ENCODE measurements at regions of chr17 and their contacts with region 1.

Region 1: DNA sequence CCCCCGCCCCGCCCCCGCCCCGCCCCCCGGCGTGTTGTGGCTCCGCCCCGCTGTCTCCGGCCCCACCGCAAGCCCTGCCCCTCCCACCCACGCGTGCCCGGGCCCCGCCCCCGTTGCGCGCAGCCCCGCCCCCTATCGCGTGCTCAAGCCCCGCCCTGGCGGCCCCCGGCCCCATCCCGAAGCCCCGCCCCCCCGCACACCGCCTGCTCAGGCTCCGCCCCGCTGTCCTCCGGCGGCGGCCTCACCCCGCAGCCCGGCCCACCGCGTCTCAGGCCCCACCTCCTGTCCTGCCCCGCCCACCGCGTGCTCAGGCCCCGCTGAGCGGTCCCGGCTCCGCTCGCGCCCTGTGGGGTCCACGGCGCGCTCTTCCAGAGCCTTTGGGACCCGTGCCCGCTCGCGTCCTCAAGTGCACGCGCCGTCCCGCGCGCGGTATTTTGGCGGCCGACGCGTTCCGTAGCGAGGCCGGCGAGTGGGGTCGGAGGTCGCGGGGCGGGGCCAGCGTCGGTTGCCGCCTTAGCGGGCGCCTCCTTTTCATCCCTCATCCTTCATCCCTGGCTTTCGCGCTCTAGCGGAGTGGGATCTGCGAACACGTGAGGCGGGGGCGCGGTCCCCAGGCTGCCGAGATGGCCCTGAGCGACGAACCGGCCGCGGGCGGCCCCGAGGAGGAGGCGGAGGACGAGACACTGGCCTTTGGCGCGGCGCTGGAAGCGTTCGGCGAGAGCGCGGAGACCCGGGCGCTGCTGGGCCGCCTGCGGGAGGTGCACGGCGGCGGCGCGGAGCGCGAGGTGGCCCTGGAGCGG is at the start of gene TBCD:
- DNase-seq: peak; percentile 95
- ATAC-seq: peak; percentile 87
- H3K4me3 ChIP-seq: peak within 1 kb of the TSS; percentile 40 to 93 (median 75)
- H3K4me3 Mint-ChIP-seq: peak within 1 kb of the TSS; percentile 85
- H3K27ac ChIP-seq: peak within 1 kb of the TSS; percentile 44 to 62
- H3K27ac Mint-ChIP-seq: peak within 1 kb of the TSS; percentile 76
- H3K4me1 ChIP-seq: peaks cover 7 to 15% of the 10 kb centered on the region in 2 donors
- H3K4me1 Mint-ChIP-seq: peaks cover 14% of the 10 kb centered on the region
- H3K27me3 ChIP-seq: no peaks in the 10 kb centered on the region
- H3K27me3 Mint-ChIP-seq: no peaks in the 10 kb centered on the region
- CTCF ChIP-seq: no peak
- total RNA-seq, gene TBCD: 97.3 and 101 TPM in 2 replicates

Region 2: DNA sequence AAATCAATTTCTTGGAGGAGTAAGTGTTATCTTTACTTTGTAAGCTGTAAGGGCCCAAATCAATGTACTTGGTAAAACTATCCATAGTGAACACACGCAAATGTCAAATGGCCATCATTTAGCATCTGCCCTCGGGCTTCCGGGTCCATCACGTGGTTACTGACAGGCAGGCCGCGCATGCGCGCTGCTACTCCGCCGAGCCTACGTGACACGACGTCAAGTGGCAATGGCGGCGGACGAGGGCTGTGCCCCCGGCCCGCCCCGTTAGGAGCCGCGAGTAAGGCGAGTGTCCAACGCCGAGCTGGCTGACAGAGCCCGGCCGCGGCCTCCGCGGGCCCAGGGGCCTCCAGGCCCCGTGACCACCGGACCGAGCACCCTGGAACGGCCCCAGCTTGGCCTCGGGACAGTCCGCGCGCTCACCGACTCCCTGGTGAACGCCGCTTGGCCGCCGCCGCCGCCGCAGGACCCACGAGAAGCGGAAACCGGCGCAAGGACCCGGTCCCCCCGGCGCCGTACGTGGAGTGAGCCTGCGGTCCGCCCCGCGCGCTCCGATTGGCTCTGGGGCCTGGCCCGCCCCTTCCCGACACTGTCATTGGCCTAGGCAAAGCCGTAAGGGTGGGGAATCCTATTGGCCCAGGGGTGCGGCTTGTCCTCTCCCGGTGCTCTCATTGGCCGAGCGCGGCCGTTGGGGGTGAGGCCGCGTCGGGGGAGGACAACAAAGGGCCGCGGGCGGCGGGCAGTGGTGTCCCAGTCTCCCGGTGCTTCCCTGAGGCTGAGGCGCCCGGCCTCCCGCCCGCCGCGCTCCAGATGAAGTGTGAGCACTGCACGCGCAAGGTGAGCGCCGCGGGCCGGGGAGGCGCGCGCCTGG is 293.5 kb before region 1 on chr17 and contains the start of gene NARF:
- CTCF ChIA-PET with region 1: no interaction called
- POLR2A ChIA-PET with region 1: no interaction called
- intact Hi-C with region 1: loop called (anchors 5 kb)
- DNase-seq: peak; percentile 97
- ATAC-seq: peak; percentile 96
- H3K4me3 ChIP-seq: peak within 1 kb of the TSS; percentile 53 to 82 (median 74)
- H3K4me3 Mint-ChIP-seq: peak within 1 kb of the TSS; percentile 81
- H3K27ac ChIP-seq: peak within 1 kb of the TSS; percentile 91 to 99
- H3K27ac Mint-ChIP-seq: peak within 1 kb of the TSS; percentile 90
- H3K4me1 ChIP-seq: peaks cover 13 to 19% of the 10 kb centered on the region in 2 donors
- H3K4me1 Mint-ChIP-seq: peaks cover 19% of the 10 kb centered on the region
- H3K27me3 ChIP-seq: no peaks in the 10 kb centered on the region
- H3K27me3 Mint-ChIP-seq: no peaks in the 10 kb centered on the region
- CTCF ChIP-seq: no peak
- total RNA-seq, gene NARF: 103 and 104 TPM in 2 replicates

Region 3: GRCh38 chr17:82648166-82648668 is 103.6 kb before region 1 on chr17 and contains the start of gene WDR45B:
- CTCF ChIA-PET with region 1: no interaction called
- POLR2A ChIA-PET with region 1: no interaction called
- intact Hi-C with region 1: loop called (anchors 5 kb)
- DNase-seq: peak; percentile 96
- ATAC-seq: peak; percentile 89
- H3K4me3 ChIP-seq: peak within 1 kb of the TSS; percentile 41 to 85 (median 75)
- H3K4me3 Mint-ChIP-seq: peak within 1 kb of the TSS; percentile 92
- H3K27ac ChIP-seq: peak within 1 kb of the TSS; percentile 83 to 89
- H3K27ac Mint-ChIP-seq: peak within 1 kb of the TSS; percentile 97
- H3K4me1 ChIP-seq: peaks cover 15 to 20% of the 10 kb centered on the region in 2 donors
- H3K4me1 Mint-ChIP-seq: peaks cover 23% of the 10 kb centered on the region
- H3K27me3 ChIP-seq: no peaks in the 10 kb centered on the region
- H3K27me3 Mint-ChIP-seq: no peaks in the 10 kb centered on the region
- CTCF ChIP-seq: no peak
- total RNA-seq, gene WDR45B: 63.3 and 72.7 TPM in 2 replicates

Region 4: GRCh38 chr17:82698065-82698973 is 53.5 kb before region 1 on chr17 and contains the start of gene RAB40B:
- CTCF ChIA-PET with region 1: no interaction called
- POLR2A ChIA-PET with region 1: no interaction called
- intact Hi-C with region 1: loop called (anchors 1 kb)
- DNase-seq: peak; percentile 99
- ATAC-seq: peak; percentile 97
- H3K4me3 ChIP-seq: peak within 1 kb of the TSS; percentile 17 to 72 (median 61)
- H3K4me3 Mint-ChIP-seq: peak within 1 kb of the TSS; percentile 96
- H3K27ac ChIP-seq: no peak within 1 kb of the TSS
- H3K27ac Mint-ChIP-seq: peak within 1 kb of the TSS; percentile 64
- H3K4me1 ChIP-seq: peaks cover 8 to 16% of the 10 kb centered on the region in 2 donors
- H3K4me1 Mint-ChIP-seq: peaks cover 10% of the 10 kb centered on the region
- H3K27me3 ChIP-seq: peaks cover 0 to 11% (median 3%) of the 10 kb centered on the region in 4 experiments
- H3K27me3 Mint-ChIP-seq: peaks cover 4% of the 10 kb centered on the region
- CTCF ChIP-seq: no peak
- total RNA-seq, gene RAB40B: 4.7 and 4.9 TPM in 2 replicates

Region 5: GRCh38 chr17:82716203-82717010 is 35.4 kb before region 1 on chr17 and contains the start of gene FN3KRP:
- CTCF ChIA-PET with region 1: no interaction called
- POLR2A ChIA-PET with region 1: interaction called, 5 read pairs
- intact Hi-C with region 1: loop called (anchors 1 kb)
- DNase-seq: peak; percentile 97
- ATAC-seq: peak; percentile 96
- H3K4me3 ChIP-seq: peak within 1 kb of the TSS; percentile 39 to 81 (median 70)
- H3K4me3 Mint-ChIP-seq: peak within 1 kb of the TSS; percentile 96
- H3K27ac ChIP-seq: peak within 1 kb of the TSS in 1 of 2 donors; percentile 62
- H3K27ac Mint-ChIP-seq: peak within 1 kb of the TSS; percentile 90
- H3K4me1 ChIP-seq: peaks cover 16 to 21% of the 10 kb centered on the region in 2 donors
- H3K4me1 Mint-ChIP-seq: peaks cover 22% of the 10 kb centered on the region
- H3K27me3 ChIP-seq: no peaks in the 10 kb centered on the region
- H3K27me3 Mint-ChIP-seq: no peaks in the 10 kb centered on the region
- CTCF ChIP-seq: no peak
- total RNA-seq, gene FN3KRP: 44.2 and 49.4 TPM in 2 replicates

Region 6: DNA sequence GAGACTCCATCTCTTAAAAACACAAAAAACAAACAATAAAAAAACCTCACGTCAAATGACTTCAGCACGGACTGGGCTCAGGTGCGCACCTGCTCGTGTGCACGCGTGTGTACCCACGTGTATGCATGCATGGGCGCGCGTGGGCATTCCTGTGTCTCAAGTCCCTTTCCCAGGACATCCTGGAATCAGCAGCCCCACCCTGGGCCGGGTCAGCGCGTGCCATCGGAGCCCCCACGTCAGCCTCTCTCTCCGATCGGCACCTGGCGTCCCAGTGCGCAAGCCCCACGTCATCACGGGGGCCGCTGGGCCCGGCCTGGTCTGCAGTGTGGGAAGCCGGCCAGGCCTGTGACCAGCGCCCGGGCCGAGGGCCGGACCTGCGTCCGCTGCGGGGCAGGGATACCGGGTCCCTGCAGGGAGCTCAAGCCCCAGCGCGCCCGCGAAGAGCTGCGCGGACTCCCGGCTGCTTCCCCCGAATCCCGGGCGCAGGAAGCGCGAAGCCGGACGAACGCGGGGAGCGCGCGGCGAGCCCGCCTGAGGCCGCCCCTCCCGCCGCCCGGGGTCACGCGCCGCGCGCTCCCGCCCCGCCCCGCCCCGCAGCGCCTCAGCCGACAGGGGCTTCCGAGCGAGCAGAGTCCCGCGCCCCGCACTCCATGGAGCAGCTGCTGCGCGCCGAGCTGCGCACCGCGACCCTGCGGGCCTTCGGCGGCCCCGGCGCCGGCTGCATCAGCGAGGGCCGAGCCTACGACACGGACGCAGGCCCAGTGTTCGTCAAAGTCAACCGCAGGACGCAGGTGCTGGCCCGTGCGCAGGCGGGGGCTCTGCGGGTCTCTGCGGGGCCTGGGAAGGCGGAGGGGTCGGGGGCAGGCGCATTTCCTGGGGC is 16.5 kb before region 1 on chr17 and contains the start of gene FN3K:
- CTCF ChIA-PET with region 1: no interaction called
- POLR2A ChIA-PET with region 1: no interaction called
- intact Hi-C with region 1: no loop called
- DNase-seq: no peak
- ATAC-seq: no peak
- H3K4me3 ChIP-seq: peak within 1 kb of the TSS in 3 of 5 experiments; percentile 18 to 55 (median 45)
- H3K4me3 Mint-ChIP-seq: peak within 1 kb of the TSS; percentile 53
- H3K27ac ChIP-seq: no peak within 1 kb of the TSS
- H3K27ac Mint-ChIP-seq: no peak within 1 kb of the TSS
- H3K4me1 ChIP-seq: peaks cover 6 to 7% of the 10 kb centered on the region in 2 donors
- H3K4me1 Mint-ChIP-seq: peaks cover 4% of the 10 kb centered on the region
- H3K27me3 ChIP-seq: peaks cover 0 to 8% (median 3%) of the 10 kb centered on the region in 4 experiments
- H3K27me3 Mint-ChIP-seq: no peaks in the 10 kb centered on the region
- CTCF ChIP-seq: no peak
- total RNA-seq, gene FN3K: 1.8 and 2.6 TPM in 2 replicates